ENCODE measurements at regions of chr2 and their contacts with region 1.

Region 1: DNA sequence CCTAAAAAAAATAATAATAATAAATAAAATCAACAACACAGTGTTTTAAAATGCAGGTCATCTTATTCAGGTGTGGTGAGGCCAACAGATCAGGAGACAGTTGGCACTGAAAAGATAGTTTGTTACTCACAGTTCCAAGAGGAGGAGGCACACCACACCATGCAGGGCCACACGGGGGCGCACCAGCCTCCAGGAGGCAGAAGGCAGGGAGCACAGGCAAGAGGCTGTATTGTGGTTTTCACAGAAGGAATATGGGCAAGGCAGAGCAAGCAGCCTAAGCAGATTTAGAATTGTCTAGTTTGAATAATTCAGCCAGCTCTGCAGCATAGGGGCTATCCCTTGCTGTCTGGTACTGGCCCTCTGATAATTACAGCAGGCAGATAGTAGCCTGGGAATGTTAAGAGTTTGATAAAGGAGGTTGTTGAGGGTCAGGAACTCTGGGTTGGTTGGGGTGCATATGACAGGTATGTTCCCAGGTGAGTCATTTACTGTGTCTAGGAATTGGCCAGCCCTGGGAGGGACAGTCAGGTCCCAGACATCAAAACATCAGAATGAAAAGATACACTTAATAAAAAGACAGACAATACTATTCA is 31.3 kb downstream of the KIAA2012 start:
- DNase-seq: peak; percentile 89
- H3K4me3 Mint-ChIP-seq: no peak overlapping the region
- H3K27ac Mint-ChIP-seq: peak overlapping the region; percentile 11
- H3K4me1 Mint-ChIP-seq: peaks cover 12% of the 10 kb centered on the region
- H3K27me3 Mint-ChIP-seq: no peaks in the 10 kb centered on the region
- CTCF ChIP-seq: peak; percentile 85

Region 2: DNA sequence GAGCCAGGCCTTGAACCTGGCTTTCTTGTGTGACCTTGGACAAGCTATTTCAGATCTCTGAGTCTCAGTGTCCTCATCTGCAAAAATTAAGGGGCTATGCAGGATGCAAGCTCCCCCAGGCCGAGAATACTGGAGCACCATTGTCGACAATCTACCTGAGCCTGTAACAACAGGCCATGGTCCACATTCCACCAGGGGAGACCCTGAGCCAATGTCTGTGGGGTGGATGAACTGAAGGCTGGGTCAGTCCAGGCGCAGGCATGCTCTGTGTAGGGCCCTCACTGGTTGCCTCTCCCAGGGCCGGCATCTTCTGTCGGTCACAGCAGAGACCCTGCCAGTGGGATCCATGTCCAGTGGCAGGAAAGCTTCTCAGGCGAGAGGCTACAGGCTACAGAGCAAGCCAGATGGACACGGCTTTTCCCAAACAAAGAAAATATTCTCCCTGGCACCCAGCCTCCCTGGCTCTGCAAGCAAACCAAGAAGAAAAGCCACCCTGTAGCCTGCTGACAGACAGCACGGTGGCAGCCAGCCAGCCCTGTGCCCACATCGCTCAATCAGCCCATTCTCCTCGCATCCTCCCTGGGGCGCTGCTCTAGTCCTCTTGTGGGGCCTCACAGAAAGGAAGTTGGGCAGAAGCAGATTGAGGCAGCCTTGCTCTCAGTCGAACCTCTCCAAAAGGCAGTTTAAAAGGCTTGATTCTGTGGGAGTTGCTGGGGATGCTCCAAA is 119.4 kb before region 1 on chr2:
- CTCF ChIA-PET with region 1: no interaction called
- intact Hi-C with region 1: no loop called
- DNase-seq: no peak
- H3K4me3 Mint-ChIP-seq: no peak overlapping the region
- H3K27ac Mint-ChIP-seq: no peak overlapping the region
- H3K4me1 Mint-ChIP-seq: peaks cover 6% of the 10 kb centered on the region
- H3K27me3 Mint-ChIP-seq: no peaks in the 10 kb centered on the region
- CTCF ChIP-seq: no peak

Region 3: GRCh38 chr2:202072226-202072625 is 32.1 kb before region 1 on chr2:
- CTCF ChIA-PET with region 1: no interaction called
- intact Hi-C with region 1: no loop called
- DNase-seq: peak; percentile 11
- H3K4me3 Mint-ChIP-seq: no peak overlapping the region
- H3K27ac Mint-ChIP-seq: no peak overlapping the region
- H3K4me1 Mint-ChIP-seq: peaks cover 6% of the 10 kb centered on the region
- H3K27me3 Mint-ChIP-seq: peaks cover 13% of the 10 kb centered on the region
- CTCF ChIP-seq: peak; percentile 68

Region 4: DNA sequence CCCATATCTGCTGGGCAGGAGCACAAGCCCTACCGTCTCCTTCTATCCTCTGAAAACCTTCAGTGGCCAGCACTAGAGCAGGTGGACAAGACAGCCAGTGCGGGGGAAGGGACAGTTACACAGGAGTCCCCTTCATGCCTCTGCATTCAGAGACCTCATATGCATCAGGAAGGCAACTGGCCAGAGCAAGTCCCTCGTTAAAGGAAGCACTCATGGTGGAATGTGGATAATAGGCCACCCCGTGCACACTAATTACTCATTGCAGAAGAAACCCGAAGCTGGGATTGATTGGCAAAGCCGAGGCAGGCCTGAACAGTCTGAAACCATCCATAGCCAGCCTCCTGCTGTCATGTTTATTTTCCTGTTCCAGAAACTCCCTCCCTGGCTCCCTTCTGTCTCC is 20.1 kb before region 1 on chr2:
- CTCF ChIA-PET with region 1: no interaction called
- intact Hi-C with region 1: no loop called
- DNase-seq: no peak
- H3K4me3 Mint-ChIP-seq: no peak overlapping the region
- H3K27ac Mint-ChIP-seq: no peak overlapping the region
- H3K4me1 Mint-ChIP-seq: peaks cover 15% of the 10 kb centered on the region
- H3K27me3 Mint-ChIP-seq: peaks cover 11% of the 10 kb centered on the region
- CTCF ChIP-seq: no peak

Region 5: DNA sequence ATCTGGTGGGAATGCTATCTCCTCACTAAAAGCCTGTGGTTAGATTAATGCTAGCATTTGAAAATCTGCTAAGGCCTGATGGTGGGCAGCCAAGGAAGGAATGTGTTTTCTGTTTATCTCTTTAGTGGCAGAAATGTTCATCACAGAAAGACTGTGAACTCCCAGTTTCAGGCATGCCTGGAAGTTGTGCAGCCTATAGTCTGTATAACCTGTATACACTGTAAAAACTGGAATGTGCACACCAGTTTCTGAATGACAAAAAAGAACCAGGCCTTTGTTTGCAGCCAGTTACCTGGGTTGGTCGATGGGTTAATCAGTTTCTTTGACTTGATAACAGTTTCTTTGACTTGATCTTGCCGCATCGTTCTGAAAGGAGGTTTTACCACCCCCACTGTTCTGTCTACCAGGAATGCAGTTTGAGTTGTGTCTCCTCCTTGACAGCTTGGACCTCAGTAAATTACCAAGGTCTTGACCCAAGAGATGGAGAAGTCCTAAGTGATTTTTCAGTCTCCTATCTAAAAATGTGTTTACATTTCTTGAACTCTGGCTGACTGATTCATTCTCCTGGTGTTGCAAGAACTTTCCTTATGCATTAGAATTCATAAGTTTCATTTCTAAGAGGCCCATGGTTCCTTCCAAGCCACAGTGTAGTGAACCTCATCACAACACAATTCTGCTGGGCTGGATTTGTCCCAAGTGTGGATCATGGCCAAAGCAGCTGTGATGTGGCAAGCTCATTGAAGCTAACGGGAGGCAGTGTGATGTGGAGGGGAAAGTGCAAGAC is 30.9 kb after region 1 on chr2:
- CTCF ChIA-PET with region 1: no interaction called
- intact Hi-C with region 1: loop called (anchors 2 kb)
- DNase-seq: peak; percentile 70
- H3K4me3 Mint-ChIP-seq: peak overlapping the region; percentile 13
- H3K27ac Mint-ChIP-seq: no peak overlapping the region
- H3K4me1 Mint-ChIP-seq: peaks cover 19% of the 10 kb centered on the region
- H3K27me3 Mint-ChIP-seq: no peaks in the 10 kb centered on the region
- CTCF ChIP-seq: no peak

Region 6: GRCh38 chr2:202165945-202166344 is 61.6 kb after region 1 on chr2:
- CTCF ChIA-PET with region 1: no interaction called
- intact Hi-C with region 1: no loop called
- DNase-seq: no peak
- H3K4me3 Mint-ChIP-seq: no peak overlapping the region
- H3K27ac Mint-ChIP-seq: no peak overlapping the region
- H3K4me1 Mint-ChIP-seq: no peaks in the 10 kb centered on the region
- H3K27me3 Mint-ChIP-seq: no peaks in the 10 kb centered on the region
- CTCF ChIP-seq: no peak

Region 7: DNA sequence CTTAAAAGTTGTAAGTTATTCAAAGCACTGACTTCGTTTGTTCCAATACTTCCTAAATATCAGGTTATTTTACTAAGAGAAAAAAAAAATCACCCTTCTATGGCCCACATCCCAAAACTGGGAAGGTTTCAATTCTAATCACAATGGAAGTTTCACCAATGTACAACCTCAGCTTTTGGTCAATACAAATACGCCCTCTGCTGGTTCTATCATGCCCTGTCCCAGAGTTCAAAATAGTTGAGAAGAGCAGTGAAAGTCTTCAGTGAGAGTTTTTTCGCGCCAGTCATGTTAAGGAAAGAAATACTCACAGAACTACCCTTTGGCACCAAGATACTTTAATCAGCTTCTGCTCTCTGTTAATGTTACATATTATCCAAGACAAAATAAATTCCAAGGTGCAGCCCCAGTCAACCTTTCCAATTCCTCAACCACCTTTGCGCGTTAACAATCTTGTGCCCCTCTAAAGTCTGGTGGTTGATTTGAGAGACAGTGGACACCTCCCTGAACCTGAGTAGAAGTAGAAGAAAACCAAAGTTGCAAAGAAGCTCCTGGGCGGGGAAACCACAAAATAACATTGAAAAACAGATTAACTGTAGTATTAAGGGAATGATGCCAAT is 74.1 kb after region 1 on chr2:
- CTCF ChIA-PET with region 1: no interaction called
- intact Hi-C with region 1: loop called (anchors 1 kb)
- DNase-seq: peak; percentile 67
- H3K4me3 Mint-ChIP-seq: no peak overlapping the region
- H3K27ac Mint-ChIP-seq: no peak overlapping the region
- H3K4me1 Mint-ChIP-seq: peaks cover 15% of the 10 kb centered on the region
- H3K27me3 Mint-ChIP-seq: no peaks in the 10 kb centered on the region
- CTCF ChIP-seq: peak; percentile 72

Measured in Calu3 (cell line).